ENCODE measurements at regions of chrX and their contacts with region 1.

Region 1: DNA sequence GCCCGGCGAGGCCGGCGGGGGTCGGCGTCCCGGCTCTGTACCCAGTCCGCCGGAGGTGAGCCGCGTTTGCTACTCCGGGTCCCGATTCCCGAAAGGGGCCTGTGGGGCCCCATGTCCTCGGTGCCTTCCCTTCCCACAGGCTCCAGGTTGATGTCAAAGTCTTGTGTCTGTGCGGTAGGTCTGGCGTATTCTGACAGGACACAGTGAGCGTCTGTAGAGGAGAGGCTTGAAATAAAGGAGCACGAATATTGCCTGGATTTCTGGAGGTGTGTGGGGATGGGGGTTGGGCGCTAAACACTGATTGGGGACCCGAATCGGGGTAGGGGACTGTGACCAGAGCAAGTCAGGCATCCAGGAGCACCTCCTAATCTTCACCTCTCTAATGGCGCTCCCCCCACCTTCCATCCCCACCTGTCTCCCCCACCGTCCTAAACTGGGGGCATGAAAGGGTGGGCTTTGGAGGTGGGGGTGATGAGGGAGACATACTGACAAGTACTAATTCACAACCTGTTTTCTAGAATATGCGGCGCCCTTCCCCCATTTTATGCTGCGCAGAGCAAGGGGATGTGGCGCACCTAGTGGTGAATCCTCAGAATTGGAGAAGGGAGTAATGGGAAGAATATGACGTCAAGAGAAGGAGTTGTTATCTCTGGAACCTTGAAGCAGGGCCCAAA is 841 bp downstream of the GPRASP2 start:
- DNase-seq: peak; percentile 27 to 83 (median 64)

Region 2: GRCh38 chrX:102580891-102581290 is 132.2 kb before region 1 on chrX:
- intact Hi-C with region 1: no loop called
- DNase-seq: no peak

Region 3: GRCh38 chrX:102659790-102660757 is 53.0 kb before region 1 on chrX:
- intact Hi-C with region 1: loop called (anchors 10 kb)
- DNase-seq: peak; percentile 69 to 95 (median 89)

Measured in head of caudate nucleus (tissue), 42 donors.